ENCODE measurements at regions of chr2 and their contacts with region 1.

Region 1: DNA sequence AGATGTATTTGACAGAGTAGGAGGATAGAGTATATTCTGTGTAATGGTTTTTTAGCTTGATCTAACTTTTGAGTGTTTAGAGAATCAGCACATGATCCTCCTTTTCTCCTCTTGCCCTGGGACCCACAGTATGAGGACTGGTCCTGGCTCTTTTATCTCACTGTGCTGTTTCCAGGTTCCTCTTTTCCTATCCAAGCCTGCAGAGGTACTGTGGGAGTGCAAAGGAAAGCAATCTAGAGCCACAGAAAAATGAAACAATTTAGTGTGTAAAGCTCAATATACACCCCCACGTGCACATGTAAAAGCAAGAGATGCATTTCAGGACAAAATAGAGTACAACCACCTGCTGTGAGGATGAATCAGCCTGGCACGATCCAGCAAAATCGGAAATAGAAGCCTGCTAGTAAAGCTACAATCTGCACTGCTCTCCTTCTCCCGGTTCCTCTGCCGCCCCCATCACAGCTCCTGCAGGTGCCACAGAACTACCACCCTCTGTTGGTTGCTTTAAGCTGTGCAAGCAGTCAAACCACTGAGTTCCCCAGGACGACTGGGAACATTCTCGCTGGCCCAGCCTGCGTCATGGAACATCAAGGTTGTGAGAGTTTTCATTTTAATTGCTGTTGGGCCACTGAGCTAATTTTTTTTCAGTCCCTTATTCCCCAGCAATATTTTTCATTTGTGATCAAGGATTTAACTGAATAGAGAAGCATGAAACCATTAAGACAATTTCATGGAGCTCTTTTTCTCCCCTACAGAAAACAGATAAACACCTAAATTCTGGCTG is 47.8 kb upstream of the MAPRE3 start:
- DNase-seq: peak; percentile 68 to 93
- ATAC-seq: peak; percentile 93 to 99
- H3K4me3 ChIP-seq: no peak overlapping the region
- H3K27ac ChIP-seq: no peak overlapping the region
- H3K4me1 ChIP-seq: peaks cover 7% of the 10 kb centered on the region; the same call in 1 of the 3 replicates
- CTCF ChIP-seq: peak; percentile 65
- EP300 ChIP-seq: no peak
- POLR2A ChIP-seq: no peak
- RAD21 ChIP-seq: peak; percentile 62 to 69

Region 2: GRCh38 chr2:26852405-26853306 is 69.9 kb before region 1 on chr2:
- CTCF ChIA-PET with region 1: interaction called, 146 read pairs
- POLR2A ChIA-PET with region 1: no interaction called
- DNase-seq: no peak
- ATAC-seq: no peak
- H3K4me3 ChIP-seq: no peak overlapping the region
- H3K27ac ChIP-seq: no peak overlapping the region
- H3K4me1 ChIP-seq: 0 out of 3 replicates have a peak, but pooled peaks cover 3% of the 10 kb centered on the region
- CTCF ChIP-seq: no peak
- EP300 ChIP-seq: no peak
- POLR2A ChIP-seq: no peak
- RAD21 ChIP-seq: no peak

Region 3: DNA sequence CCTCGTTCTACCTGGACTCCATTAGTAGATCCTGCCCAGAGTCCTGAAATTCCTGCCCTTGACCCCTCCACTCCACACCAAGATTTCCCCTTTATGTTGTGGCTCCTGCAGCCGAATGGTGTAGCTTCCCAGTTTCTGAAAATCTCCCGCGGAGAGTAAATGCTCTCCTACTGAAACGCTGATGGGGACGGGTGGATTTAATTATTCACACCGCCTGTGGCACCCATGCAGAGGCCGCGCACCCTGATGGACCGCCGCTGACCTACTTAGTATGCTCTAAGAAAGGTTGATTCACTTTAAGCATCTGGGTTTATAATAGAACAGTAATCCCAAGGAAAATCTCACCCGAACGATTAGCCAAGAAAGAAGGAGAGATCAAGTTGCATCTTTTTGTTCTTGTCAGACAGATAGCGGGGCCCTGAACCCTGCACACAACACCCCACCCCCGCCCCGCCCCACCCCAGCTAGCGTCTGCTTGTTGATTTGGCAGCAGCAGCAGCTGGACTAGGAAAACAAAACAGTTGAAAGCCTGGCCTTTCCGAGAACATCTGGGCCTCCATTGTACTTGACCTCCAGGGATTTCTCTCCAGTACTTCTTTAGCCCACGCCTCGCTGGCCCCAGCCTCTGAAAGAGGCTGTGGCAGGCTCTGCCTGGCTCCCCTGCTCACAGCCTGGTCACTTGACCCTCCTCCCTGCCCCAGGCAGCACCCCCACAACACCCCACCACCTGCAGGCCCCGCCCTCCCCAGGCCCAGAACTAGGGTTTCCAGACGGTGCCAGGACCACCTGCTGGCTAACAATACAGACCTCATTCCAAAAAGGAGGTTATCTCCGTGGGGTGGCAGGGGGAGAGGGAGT is 21.0 kb before region 1 on chr2:
- CTCF ChIA-PET with region 1: interaction called, 24 read pairs
- POLR2A ChIA-PET with region 1: no interaction called
- DNase-seq: no peak
- ATAC-seq: no peak
- H3K4me3 ChIP-seq: no peak overlapping the region
- H3K27ac ChIP-seq: no peak overlapping the region
- H3K4me1 ChIP-seq: no peaks in the 10 kb centered on the region
- CTCF ChIP-seq: no peak
- EP300 ChIP-seq: no peak
- POLR2A ChIP-seq: no peak
- RAD21 ChIP-seq: no peak

Region 4: GRCh38 chr2:26933431-26934334 is 11.1 kb after region 1 on chr2:
- CTCF ChIA-PET with region 1: interaction called, 26 read pairs
- POLR2A ChIA-PET with region 1: no interaction called
- DNase-seq: no peak
- ATAC-seq: peak in 1 of 2 experiments; percentile 42; a peak in 3 of 6 replicates
- H3K4me3 ChIP-seq: no peak overlapping the region
- H3K27ac ChIP-seq: no peak overlapping the region
- H3K4me1 ChIP-seq: no peaks in the 10 kb centered on the region
- CTCF ChIP-seq: no peak
- EP300 ChIP-seq: no peak
- POLR2A ChIP-seq: no peak
- RAD21 ChIP-seq: no peak

Region 5: GRCh38 chr2:26942543-26943295 is 20.1 kb after region 1 on chr2:
- CTCF ChIA-PET with region 1: interaction called, 26 read pairs
- POLR2A ChIA-PET with region 1: no interaction called
- DNase-seq: peak; percentile 78 to 87
- ATAC-seq: peak; percentile 64 to 82; a peak in 5 of 6 replicates
- H3K4me3 ChIP-seq: no peak overlapping the region
- H3K27ac ChIP-seq: no peak overlapping the region
- H3K4me1 ChIP-seq: peaks cover 8% of the 10 kb centered on the region; the same call in 1 of the 3 replicates
- CTCF ChIP-seq: peak; percentile 96
- EP300 ChIP-seq: no peak
- POLR2A ChIP-seq: no peak
- RAD21 ChIP-seq: peak; percentile 79 to 88

Region 6: DNA sequence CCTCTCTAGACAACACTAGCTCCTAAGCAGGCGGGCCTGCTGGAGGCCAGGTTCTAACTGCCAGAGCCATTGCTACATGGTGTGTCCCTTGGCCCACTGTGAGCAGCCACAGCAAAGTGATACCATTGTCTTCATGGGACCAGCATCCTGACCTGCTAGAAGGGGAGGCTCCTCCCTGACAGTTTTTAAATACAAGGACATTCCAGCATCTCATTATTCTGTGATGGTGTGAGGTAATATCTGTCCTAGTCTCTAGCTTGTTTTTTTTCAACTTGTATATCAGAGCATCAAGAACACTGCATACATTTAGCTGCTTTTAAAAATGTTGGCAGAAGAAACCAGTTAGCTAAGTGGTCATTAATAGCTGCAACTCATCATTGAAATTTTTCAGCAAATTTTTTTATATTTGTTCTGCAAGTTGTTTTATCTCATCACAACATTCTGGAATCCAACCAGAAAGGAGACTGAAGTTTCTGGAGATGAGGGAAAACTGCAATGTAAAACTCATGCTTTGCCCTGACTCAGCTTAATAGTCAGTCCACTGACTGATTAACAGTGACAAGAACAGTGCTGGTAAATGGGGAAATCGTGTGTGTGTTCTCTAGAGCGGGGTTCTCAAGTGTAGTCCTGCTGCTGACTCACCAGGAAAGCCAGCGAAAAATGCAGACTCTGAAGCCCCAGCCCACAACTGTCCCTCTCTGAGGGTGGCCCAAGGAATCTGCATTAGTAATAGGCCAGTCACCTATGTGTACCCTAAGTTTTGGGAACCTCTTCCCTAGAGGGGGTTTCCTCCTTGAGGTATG is 65.7 kb after region 1 on chr2:
- CTCF ChIA-PET with region 1: no interaction called
- POLR2A ChIA-PET with region 1: no interaction called
- DNase-seq: no peak
- ATAC-seq: peak; percentile 51 to 63; a peak in 3 of 6 replicates
- H3K4me3 ChIP-seq: no peak overlapping the region
- H3K27ac ChIP-seq: no peak overlapping the region
- H3K4me1 ChIP-seq: peaks cover 8% of the 10 kb centered on the region; the same call in 1 of the 3 replicates
- CTCF ChIP-seq: no peak
- EP300 ChIP-seq: no peak
- POLR2A ChIP-seq: no peak
- RAD21 ChIP-seq: no peak